ENCODE measurements at regions of chrX and their contacts with region 1.

Region 1: GRCh38 chrX:130539721-130540321 is 138.0 kb downstream of the RBMX2 start:
- DNase-seq: peak; percentile 47
- H3K4me3 ChIP-seq: peak overlapping the region in 1 of 2 experiments; percentile 19; a peak in 1 of 4 replicates
- H3K27ac ChIP-seq: no peak overlapping the region
- H3K4me1 ChIP-seq: no peaks in the 10 kb centered on the region
- H3K27me3 ChIP-seq: peaks cover 20% of the 10 kb centered on the region; the same call in 1 of the 2 replicates
- CTCF ChIP-seq: peak; percentile 94
- EP300 ChIP-seq: no peak
- RAD21 ChIP-seq: peak; percentile 74

Region 2: DNA sequence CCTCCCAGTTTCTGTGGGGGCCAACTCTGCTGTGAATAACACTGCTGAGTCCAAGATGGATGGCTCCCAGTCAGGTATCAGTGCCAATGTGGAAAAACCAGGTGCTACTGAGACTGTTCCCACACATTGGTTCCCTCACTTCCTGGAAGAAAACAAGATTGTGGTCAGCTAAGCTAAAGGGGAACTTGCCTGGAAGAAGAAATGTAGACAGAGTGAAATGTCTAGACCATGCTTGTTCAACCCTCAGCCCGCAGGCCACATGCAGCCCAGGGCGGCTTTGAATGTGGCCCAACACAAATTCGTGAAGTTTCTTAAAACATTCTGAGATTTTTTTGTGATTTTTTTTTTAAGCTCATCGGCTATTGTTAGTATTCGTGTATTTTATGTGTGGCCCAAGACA is 662.4 kb before region 1 on chrX:
- CTCF ChIA-PET with region 1: no interaction called
- POLR2A ChIA-PET with region 1: no interaction called
- DNase-seq: no peak
- H3K4me3 ChIP-seq: no peak overlapping the region
- H3K27ac ChIP-seq: no peak overlapping the region
- H3K4me1 ChIP-seq: no peaks in the 10 kb centered on the region
- H3K27me3 ChIP-seq: peaks cover 28% of the 10 kb centered on the region; the same call in 1 of the 2 replicates
- CTCF ChIP-seq: no peak
- EP300 ChIP-seq: no peak
- RAD21 ChIP-seq: no peak

Region 3: DNA sequence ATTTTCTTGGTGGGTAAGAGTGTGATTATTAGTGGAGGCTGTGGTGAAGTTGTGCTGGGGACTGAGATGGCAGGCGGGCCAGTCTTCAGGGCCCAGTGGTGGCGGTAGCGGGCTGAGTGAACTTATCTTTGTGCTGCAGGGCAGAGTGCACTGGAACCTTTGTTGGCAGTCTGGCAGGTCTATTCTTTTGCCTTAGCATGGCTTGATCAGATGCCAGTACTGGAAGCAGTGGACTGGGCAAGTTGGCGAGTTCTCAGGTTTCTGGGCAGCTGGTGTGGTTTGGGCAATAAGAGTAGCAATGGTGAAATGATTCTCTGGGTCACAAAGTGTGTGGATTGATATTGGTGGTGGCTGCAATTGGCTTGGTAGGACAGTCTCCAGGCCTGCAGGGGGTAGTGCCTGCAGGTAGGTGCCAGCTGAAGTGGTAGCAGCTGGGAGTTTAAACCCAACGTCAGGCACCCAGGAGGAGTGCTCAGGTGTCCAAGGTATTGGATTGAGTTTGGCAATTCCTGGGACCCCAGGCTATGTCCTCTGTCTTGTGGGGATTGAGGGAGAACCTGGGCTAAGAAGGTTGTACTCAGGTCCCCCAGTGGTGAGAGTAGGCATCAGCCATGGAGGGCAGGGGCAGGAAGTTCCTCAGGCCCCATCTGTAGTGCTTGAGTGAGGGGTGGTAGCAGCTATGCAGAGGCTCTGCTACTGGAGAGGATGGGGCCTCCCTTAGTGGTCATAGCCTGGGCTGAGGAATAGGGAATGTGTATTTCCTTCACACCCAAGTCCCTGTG is 235.0 kb before region 1 on chrX:
- CTCF ChIA-PET with region 1: no interaction called
- POLR2A ChIA-PET with region 1: no interaction called
- DNase-seq: no peak
- H3K4me3 ChIP-seq: no peak overlapping the region
- H3K27ac ChIP-seq: no peak overlapping the region
- H3K4me1 ChIP-seq: no peaks in the 10 kb centered on the region
- H3K27me3 ChIP-seq: no peaks in the 10 kb centered on the region; the same call in 1 of the 2 replicates
- CTCF ChIP-seq: no peak
- EP300 ChIP-seq: no peak
- RAD21 ChIP-seq: no peak

Region 4: DNA sequence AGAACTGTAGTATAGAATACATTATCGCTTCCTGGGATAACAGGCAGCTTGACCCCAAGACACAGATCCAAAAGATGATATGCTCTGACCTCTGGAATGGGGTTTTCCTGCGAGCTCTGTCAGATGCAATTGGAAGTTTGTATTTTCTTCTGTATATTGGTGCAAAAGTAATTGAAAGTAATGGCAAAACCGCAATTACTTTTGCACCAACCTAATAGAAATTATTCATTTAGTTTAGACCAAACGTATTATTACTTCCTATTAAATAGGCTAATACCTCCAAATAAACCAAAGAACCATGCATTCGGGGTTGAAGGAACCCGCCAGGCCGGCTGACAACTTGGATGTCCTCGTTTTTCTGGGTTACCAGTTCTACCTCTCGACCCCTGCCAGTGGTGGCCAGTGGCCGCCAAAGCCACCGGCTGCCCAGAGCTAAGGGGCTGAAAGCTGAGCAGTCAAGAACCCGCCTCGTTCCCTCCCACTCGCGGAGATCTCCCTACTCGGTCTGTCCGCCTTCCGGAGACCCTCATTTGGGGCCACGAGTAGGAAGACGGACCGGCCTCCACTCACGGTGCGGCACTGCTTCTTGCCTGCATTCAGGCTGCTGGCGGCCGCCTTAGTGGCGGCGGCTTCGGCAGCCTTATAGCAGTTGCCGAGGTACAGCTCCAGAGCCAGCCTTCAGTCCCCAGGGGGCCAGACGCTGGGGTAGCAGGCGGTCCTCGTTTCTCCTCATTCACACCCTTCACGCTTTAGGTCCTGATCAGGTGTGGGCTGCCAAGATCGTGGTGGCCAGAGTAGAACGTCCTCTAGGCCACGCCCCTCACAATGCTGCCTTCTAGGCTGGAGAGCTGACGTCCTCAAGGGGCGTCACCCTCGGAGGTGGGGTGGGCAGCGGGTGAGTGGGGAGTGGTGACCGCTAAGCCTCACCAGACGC is 16.1 kb before region 1 on chrX:
- CTCF ChIA-PET with region 1: interaction called, 10 read pairs
- POLR2A ChIA-PET with region 1: no interaction called
- DNase-seq: peak; percentile 80
- H3K4me3 ChIP-seq: peak overlapping the region; percentile 44 to 55
- H3K27ac ChIP-seq: no peak overlapping the region; a peak in 1 of 4 replicates
- H3K4me1 ChIP-seq: no peaks in the 10 kb centered on the region
- H3K27me3 ChIP-seq: no peaks in the 10 kb centered on the region
- CTCF ChIP-seq: no peak
- EP300 ChIP-seq: no peak
- RAD21 ChIP-seq: no peak

Region 5: DNA sequence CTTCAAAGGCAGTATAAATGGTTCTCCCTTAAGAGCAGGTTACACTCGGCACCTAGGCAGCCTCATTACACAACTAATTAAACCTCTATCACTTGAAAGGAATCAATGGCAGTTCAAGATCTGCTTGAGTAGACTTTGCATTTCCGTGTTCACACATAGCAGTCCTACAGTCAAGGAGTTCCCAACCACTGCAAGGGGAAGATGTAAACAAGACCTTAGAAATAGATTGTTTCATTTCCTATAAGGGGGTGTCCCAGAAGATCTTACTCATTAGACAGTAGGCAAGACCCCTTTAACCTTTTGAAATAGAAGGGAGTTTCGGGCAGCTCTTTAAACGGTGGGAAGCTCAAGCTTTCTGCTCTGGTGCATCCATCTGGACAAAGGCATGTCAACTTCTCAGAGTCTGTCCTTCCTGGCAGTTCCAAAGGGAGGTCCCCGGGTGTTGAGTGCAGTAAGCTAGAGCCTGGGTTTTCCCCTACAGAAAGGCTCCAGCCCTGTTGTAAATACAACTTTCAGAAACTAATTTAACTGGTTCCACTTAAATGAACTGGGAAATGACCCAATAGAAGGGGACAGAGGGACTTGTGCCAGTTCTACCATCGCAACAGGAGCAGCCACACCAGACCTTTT is 12.7 kb after region 1 on chrX:
- CTCF ChIA-PET with region 1: interaction called, 24 read pairs
- POLR2A ChIA-PET with region 1: no interaction called
- DNase-seq: no peak
- H3K4me3 ChIP-seq: no peak overlapping the region
- H3K27ac ChIP-seq: no peak overlapping the region
- H3K4me1 ChIP-seq: peaks cover 0 to 5% of the 10 kb centered on the region in 2 experiments; a peak in 1 of 4 replicates
- H3K27me3 ChIP-seq: peaks cover 20% of the 10 kb centered on the region; the same call in 1 of the 2 replicates
- CTCF ChIP-seq: no peak
- EP300 ChIP-seq: no peak
- RAD21 ChIP-seq: no peak

Region 6: DNA sequence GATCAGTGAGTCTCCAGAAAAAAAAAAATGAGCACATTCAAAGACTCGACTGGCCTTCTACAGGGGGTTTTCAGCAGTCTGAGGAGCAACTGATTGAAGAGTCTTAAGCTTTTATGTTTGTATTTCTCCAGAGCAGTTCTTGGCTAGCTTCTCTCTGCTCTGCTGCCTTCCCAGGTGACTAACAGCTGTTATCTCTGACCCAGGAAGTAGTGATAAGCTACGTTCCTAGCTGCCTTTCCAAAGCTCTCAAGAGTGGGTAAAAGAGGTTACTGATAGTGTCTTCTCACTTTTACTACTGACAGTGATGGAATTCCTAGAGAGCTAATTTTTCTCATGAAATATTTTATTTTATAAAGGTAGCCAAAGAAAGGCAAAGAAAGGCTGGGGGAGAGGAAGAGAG is 296.6 kb after region 1 on chrX:
- CTCF ChIA-PET with region 1: no interaction called
- POLR2A ChIA-PET with region 1: no interaction called
- DNase-seq: no peak
- H3K4me3 ChIP-seq: no peak overlapping the region
- H3K27ac ChIP-seq: no peak overlapping the region
- H3K4me1 ChIP-seq: no peaks in the 10 kb centered on the region; a peak in 1 of 4 replicates
- H3K27me3 ChIP-seq: no peaks in the 10 kb centered on the region
- CTCF ChIP-seq: no peak
- EP300 ChIP-seq: no peak
- RAD21 ChIP-seq: no peak